Right ventricle myocardium inferior (tissue), 1 donor: ENCODE measurements at regions of chr9 and their contacts with region 1.

Region 1: DNA sequence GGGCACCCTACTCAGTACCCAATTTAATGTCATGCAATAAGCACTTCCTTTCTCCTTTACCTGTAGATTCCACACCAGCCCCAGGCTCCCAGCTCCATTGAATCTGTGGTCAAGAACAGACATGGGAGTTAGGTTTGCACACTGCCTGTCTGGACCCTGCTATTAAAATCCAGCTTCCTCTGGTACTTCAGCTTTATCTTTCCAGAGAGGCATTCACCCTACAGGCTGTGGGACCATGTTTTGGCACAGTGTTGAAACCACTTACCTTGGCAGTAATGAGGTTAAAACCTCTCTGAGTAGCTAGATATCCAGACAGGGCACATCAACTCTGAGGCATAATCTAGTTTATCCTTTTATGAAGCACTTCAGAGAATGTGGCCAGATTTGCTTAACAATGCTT is 191.5 kb upstream of the PCSK5 start:
- DNase-seq: no peak
- ATAC-seq: peak; percentile 84

Region 2: GRCh38 chr9:75601279-75601678 is 97.7 kb before region 1 on chr9:
- intact Hi-C with region 1: loop called (anchors 10 kb)
- DNase-seq: no peak
- ATAC-seq: no peak

Region 3: GRCh38 chr9:75644649-75645048 is 54.4 kb before region 1 on chr9:
- intact Hi-C with region 1: loop called (anchors 5 kb)
- DNase-seq: peak; percentile 56
- ATAC-seq: peak; percentile 18

Region 4: DNA sequence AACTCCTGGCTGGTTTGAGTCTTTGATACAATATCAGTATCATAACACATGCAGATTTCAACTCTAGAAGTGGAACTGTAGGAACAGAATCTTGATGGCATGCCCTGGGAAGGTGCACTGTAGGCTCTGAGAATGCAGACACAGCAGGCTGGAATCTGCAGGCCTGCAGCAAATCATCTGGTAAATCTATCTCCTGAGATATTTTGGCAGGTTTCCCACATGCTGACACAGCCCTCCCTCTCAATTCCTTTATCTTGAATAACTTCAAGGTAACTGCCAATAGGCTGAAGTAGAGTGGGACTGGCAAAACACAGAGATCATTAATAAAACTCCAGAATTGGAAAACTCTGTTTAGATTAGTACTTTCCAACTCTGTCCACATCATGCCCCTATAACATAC is 13.7 kb after region 1 on chr9:
- intact Hi-C with region 1: no loop called
- DNase-seq: no peak
- ATAC-seq: no peak

Region 5: GRCh38 chr9:75754080-75754479 is 55.1 kb after region 1 on chr9:
- intact Hi-C with region 1: loop called (anchors 2 kb)
- DNase-seq: peak; percentile 66
- ATAC-seq: peak; percentile 97